ENCODE measurements at regions of chr1 and their contacts with region 1.

Region 1: GRCh38 chr1:119275145-119276134 is 93.1 kb upstream of the HAO2 start:
- DNase-seq: peak in 1 of 2 experiments; percentile 59
- H3K4me3 ChIP-seq: no peak overlapping the region
- H3K27ac ChIP-seq: no peak overlapping the region
- H3K4me1 ChIP-seq: no peaks in the 10 kb centered on the region
- H3K27me3 ChIP-seq: no peaks in the 10 kb centered on the region
- CTCF ChIP-seq: peak in 2 of 3 experiments; percentile 74 to 92; a peak in 3 of 4 replicates
- EP300 ChIP-seq: no peak
- POLR2A ChIP-seq: no peak
- RAD21 ChIP-seq: peak; percentile 77 to 83

Region 2: DNA sequence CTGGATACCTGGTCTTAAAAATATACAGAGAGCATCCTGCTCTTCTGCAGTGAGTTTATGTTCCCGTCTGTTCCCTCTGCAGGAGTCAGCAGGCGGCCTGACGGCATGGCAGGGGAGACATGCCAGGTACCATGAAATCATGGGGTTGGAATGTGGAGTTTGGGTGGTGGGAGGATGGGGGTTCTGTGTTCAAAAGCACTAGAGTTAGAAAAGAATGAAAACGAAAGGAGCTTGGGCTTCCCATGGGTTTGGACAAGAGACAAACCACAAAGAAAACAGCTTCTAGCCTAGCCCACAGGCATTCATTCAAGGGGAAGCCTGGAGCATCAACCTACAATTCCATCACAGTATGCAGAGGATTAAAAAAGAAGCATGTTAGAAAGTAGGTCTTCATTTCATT is 194.9 kb before region 1 on chr1:
- CTCF ChIA-PET with region 1: no interaction called
- POLR2A ChIA-PET with region 1: no interaction called
- DNase-seq: peak in 1 of 2 experiments; percentile 47
- H3K4me3 ChIP-seq: no peak overlapping the region
- H3K27ac ChIP-seq: no peak overlapping the region; the same call in 1 of the 2 replicates
- H3K4me1 ChIP-seq: no peaks in the 10 kb centered on the region
- H3K27me3 ChIP-seq: no peaks in the 10 kb centered on the region
- CTCF ChIP-seq: no peak
- EP300 ChIP-seq: 0 out of 3 replicates have a peak, but pooled peaks of 1 of the 2 experiments have one; percentile 8
- POLR2A ChIP-seq: no peak
- RAD21 ChIP-seq: no peak

Region 3: DNA sequence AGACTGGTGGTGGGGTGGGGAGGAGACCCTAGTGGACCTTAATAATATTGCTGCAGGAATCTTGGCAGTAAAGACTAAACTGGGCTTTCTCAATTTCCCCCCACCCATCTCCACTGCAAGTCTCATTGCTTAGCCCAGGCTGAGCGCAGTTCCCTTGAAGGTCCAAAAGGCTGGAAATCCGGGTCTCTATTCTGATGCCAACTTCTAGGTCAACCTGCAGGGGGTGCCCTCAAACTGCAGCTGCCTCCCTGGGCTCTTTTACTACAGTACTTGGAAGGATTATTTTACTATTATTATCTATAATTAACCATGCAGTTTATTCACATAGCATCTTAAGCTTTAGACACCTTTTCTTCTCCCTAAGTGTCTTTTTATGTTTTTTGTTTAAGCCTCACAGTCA is 49.6 kb before region 1 on chr1:
- CTCF ChIA-PET with region 1: interaction called, 32 read pairs
- POLR2A ChIA-PET with region 1: no interaction called
- DNase-seq: no peak
- H3K4me3 ChIP-seq: no peak overlapping the region
- H3K27ac ChIP-seq: no peak overlapping the region
- H3K4me1 ChIP-seq: peaks cover 0 to 4% (median 2%) of the 10 kb centered on the region in 4 experiments; a peak in 3 of 7 replicates
- H3K27me3 ChIP-seq: no peaks in the 10 kb centered on the region
- CTCF ChIP-seq: peak; percentile 46 to 67 (median 48)
- EP300 ChIP-seq: no peak
- POLR2A ChIP-seq: no peak
- RAD21 ChIP-seq: peak; percentile 53 to 58

Region 4: GRCh38 chr1:119245881-119246280 is 29.6 kb before region 1 on chr1:
- CTCF ChIA-PET with region 1: interaction called, 10 read pairs
- POLR2A ChIA-PET with region 1: no interaction called
- DNase-seq: no peak
- H3K4me3 ChIP-seq: no peak overlapping the region
- H3K27ac ChIP-seq: no peak overlapping the region
- H3K4me1 ChIP-seq: no peaks in the 10 kb centered on the region
- H3K27me3 ChIP-seq: no peaks in the 10 kb centered on the region
- CTCF ChIP-seq: no peak
- EP300 ChIP-seq: no peak
- POLR2A ChIP-seq: no peak
- RAD21 ChIP-seq: no peak

Region 5: DNA sequence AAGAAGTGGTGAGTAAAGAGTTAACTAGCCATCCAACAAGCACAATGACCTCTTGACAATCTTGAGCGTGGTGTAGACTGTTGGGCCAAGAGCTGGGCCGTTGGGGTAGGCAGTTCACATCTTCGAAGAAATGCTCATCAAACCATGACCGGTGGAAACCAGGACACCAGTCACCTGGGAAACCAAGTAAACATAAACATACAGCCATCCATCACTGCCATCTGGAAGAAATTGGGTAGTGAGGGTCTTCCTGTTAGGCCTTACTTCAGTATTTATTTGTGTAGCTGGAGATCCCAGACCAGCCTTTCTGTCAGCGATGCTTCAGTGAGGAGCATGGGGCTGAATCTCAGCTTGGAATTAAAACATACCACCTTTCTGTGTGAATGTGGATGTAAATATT is 14.9 kb before region 1 on chr1:
- CTCF ChIA-PET with region 1: interaction called, 30 read pairs
- POLR2A ChIA-PET with region 1: interaction called, 3 read pairs
- DNase-seq: no peak
- H3K4me3 ChIP-seq: no peak overlapping the region
- H3K27ac ChIP-seq: no peak overlapping the region
- H3K4me1 ChIP-seq: no peaks in the 10 kb centered on the region
- H3K27me3 ChIP-seq: no peaks in the 10 kb centered on the region; a peak in 1 of 7 replicates
- CTCF ChIP-seq: no peak
- EP300 ChIP-seq: no peak
- POLR2A ChIP-seq: no peak
- RAD21 ChIP-seq: no peak

Region 6: DNA sequence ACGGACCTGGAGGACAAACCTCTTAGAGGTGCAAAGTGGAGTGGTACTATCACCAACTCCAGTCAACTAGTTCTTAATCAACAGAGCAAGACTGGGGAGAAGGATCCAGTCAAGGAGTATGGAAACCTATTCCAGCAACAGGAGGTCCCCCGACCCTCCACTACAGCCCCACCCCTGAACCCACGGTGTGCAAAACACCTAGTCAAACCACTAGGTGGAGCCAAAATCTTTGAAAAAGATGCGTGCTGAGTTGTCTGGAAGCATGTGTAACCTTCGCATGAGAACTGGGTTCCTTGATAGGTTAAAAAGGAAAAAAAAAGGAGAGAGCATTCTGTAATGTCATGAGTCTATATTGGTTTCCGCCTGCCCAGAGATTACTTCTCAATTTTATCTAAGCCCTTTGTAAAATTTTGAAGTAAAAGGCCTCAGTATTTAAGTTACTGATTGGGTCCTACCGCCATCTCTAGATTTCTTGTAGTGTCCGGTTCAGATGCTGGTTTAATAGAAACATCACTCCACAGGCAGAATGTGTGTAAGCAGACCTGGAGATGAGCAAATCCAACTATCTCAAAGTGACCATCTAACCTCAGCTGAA is 11.2 kb after region 1 on chr1:
- CTCF ChIA-PET with region 1: interaction called, 18 read pairs
- POLR2A ChIA-PET with region 1: no interaction called
- DNase-seq: peak in 1 of 2 experiments; percentile 66
- H3K4me3 ChIP-seq: no peak overlapping the region
- H3K27ac ChIP-seq: no peak overlapping the region
- H3K4me1 ChIP-seq: no peaks in the 10 kb centered on the region
- H3K27me3 ChIP-seq: no peaks in the 10 kb centered on the region
- CTCF ChIP-seq: peak; percentile 61 to 84 (median 79)
- EP300 ChIP-seq: no peak
- POLR2A ChIP-seq: no peak
- RAD21 ChIP-seq: peak; percentile 92 to 93

Region 7: GRCh38 chr1:119336848-119337247 is 61.4 kb after region 1 on chr1:
- CTCF ChIA-PET with region 1: no interaction called
- POLR2A ChIA-PET with region 1: no interaction called
- DNase-seq: no peak
- H3K4me3 ChIP-seq: no peak overlapping the region
- H3K27ac ChIP-seq: no peak overlapping the region
- H3K4me1 ChIP-seq: peaks cover 7 to 23% (median 17%) of the 10 kb centered on the region in 4 experiments
- H3K27me3 ChIP-seq: no peaks in the 10 kb centered on the region; a peak in 2 of 7 replicates
- CTCF ChIP-seq: no peak
- EP300 ChIP-seq: no peak
- POLR2A ChIP-seq: no peak
- RAD21 ChIP-seq: no peak

Region 8: GRCh38 chr1:119367427-119368124 is 92.1 kb after region 1 on chr1:
- CTCF ChIA-PET with region 1: interaction called, 368 read pairs
- POLR2A ChIA-PET with region 1: no interaction called
- DNase-seq: no peak
- H3K4me3 ChIP-seq: no peak overlapping the region
- H3K27ac ChIP-seq: no peak overlapping the region
- H3K4me1 ChIP-seq: peaks cover 0 to 3% (median 2%) of the 10 kb centered on the region in 4 experiments; a peak in 3 of 7 replicates
- H3K27me3 ChIP-seq: no peaks in the 10 kb centered on the region; a peak in 1 of 7 replicates
- CTCF ChIP-seq: peak in 2 of 3 experiments; percentile 83 to 96; a peak in 3 of 4 replicates
- EP300 ChIP-seq: no peak
- POLR2A ChIP-seq: no peak
- RAD21 ChIP-seq: peak; percentile 100

Region 9: GRCh38 chr1:119372490-119373086 is 97.1 kb after region 1 on chr1:
- CTCF ChIA-PET with region 1: interaction called, 368 read pairs
- POLR2A ChIA-PET with region 1: no interaction called
- DNase-seq: peak in 1 of 2 experiments; percentile 53
- H3K4me3 ChIP-seq: no peak overlapping the region
- H3K27ac ChIP-seq: no peak overlapping the region
- H3K4me1 ChIP-seq: peaks cover 0 to 3% (median 0%) of the 10 kb centered on the region in 4 experiments; a peak in 2 of 7 replicates
- H3K27me3 ChIP-seq: no peaks in the 10 kb centered on the region
- CTCF ChIP-seq: peak in 2 of 3 experiments; percentile 59 to 64; a peak in 3 of 4 replicates
- EP300 ChIP-seq: no peak
- POLR2A ChIP-seq: no peak
- RAD21 ChIP-seq: peak; percentile 84 to 86

Region 10: DNA sequence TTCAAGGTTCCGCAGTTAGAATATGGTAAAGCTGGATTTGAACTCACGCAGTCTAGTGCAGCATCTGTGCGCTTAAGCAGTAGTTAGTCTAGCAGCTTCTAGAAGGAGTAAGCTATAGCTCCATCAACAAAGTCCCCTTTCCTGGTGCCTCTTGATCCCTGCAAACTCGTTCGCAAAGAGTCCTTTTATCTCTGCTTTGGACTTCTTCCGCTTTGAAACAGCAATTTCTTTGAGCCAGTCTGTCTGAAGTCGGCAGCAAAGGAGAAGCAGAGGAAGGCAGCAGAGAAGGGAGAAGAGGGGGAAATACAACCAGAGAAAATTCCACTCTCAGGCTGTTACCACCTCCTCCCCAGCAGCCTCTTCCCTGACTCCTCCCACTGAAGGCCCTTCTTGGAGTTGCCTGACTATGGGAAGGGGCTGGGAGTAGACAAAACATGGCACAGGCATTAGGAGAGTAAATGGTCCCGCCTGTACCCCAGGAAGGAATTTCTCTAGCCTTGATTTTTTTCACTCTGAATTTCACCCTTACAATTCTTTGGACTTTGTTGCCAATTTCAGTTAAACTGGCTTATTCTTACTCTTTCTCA is 165.4 kb after region 1 on chr1:
- CTCF ChIA-PET with region 1: no interaction called
- POLR2A ChIA-PET with region 1: no interaction called
- DNase-seq: no peak
- H3K4me3 ChIP-seq: no peak overlapping the region
- H3K27ac ChIP-seq: no peak overlapping the region; the same call in 1 of the 2 replicates
- H3K4me1 ChIP-seq: no peaks in the 10 kb centered on the region
- H3K27me3 ChIP-seq: peaks cover 0 to 1% (median 0%) of the 10 kb centered on the region in 4 experiments; a peak in 1 of 7 replicates
- CTCF ChIP-seq: no peak
- EP300 ChIP-seq: no peak
- POLR2A ChIP-seq: no peak
- RAD21 ChIP-seq: no peak

Measured in H1 (cell line).